PC-3 (cell line): ENCODE measurements at regions of chr10 and their contacts with region 1.

Region 1: GRCh38 chr10:125629763-125630376 is 53.1 kb downstream of the TEX36 start:
- DNase-seq: peak; percentile 68
- ATAC-seq: peak; percentile 74
- H3K4me3 ChIP-seq: no peak overlapping the region
- H3K27ac ChIP-seq: no peak overlapping the region
- H3K4me1 ChIP-seq: peaks cover 14% of the 10 kb centered on the region
- H3K27me3 ChIP-seq: peaks cover 23% of the 10 kb centered on the region
- CTCF ChIP-seq: peak; percentile 72

Region 2: GRCh38 chr10:125472032-125472607 is 157.8 kb before region 1 on chr10:
- CTCF ChIA-PET with region 1: no interaction called
- POLR2A ChIA-PET with region 1: no interaction called
- intact Hi-C with region 1: no loop called
- DNase-seq: no peak
- ATAC-seq: no peak
- H3K4me3 ChIP-seq: no peak overlapping the region
- H3K27ac ChIP-seq: no peak overlapping the region
- H3K4me1 ChIP-seq: no peaks in the 10 kb centered on the region
- H3K27me3 ChIP-seq: peaks cover 96% of the 10 kb centered on the region
- CTCF ChIP-seq: no peak

Region 3: DNA sequence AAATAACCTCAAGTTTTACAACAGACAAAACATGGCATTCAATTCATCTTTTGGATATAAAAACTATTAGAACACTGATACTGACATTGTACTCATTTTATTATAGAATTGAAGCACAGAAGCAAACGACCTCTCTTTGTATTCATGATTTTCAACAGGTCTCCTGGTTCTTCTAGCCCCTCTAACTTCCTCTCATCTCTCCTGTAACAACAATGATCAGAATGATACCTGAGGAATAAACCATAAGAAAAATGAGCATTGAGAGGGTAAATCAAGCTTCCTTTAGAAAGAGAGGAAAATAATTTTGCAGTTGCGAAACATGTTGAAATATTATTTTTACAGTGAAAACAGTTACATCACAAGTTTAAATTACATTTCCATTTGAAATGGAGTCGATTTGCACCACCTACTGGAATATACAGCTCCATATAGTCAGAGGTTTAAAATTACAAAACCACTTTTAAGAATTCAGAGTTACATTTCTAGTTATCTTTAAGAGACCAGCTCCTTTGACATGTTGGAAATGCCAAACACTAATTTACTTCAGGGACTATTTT is 70.6 kb after region 1 on chr10:
- CTCF ChIA-PET with region 1: no interaction called
- POLR2A ChIA-PET with region 1: no interaction called
- intact Hi-C with region 1: loop called (anchors 2 kb)
- DNase-seq: peak; percentile 37
- ATAC-seq: no peak
- H3K4me3 ChIP-seq: no peak overlapping the region
- H3K27ac ChIP-seq: no peak overlapping the region
- H3K4me1 ChIP-seq: peaks cover 5% of the 10 kb centered on the region
- H3K27me3 ChIP-seq: no peaks in the 10 kb centered on the region
- CTCF ChIP-seq: peak; percentile 54

Region 4: DNA sequence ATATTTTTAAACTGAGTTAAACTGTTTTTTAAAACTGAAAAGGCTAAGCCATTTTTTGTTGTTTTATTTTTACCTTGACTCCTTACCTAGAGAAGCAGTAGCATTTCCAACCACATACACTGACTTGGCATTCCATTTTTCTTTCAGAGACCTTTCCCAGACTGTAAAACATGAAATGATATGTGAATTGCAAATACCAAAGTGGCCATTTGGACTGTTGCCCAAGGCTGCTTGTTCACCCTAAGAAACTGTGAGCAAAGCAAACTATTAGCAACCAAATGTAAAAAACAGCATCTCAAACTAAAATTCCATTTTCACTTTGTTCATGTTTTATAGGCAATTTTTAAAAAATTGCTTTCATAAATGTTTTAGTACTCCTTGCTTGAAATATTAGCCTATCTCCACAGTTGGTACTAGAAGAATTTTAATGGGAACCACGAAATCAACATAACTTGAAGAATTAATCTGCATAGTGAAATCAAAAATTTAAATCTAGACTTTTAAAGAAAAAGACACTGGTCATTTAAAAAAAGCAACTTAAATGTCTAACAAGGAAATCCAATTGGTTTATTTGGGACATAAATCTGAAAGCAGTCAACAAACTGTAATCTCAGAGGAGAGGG is 182.4 kb after region 1 on chr10:
- CTCF ChIA-PET with region 1: no interaction called
- POLR2A ChIA-PET with region 1: no interaction called
- intact Hi-C with region 1: no loop called
- DNase-seq: peak; percentile 21
- ATAC-seq: peak; percentile 42
- H3K4me3 ChIP-seq: no peak overlapping the region
- H3K27ac ChIP-seq: peak overlapping the region; percentile 57
- H3K4me1 ChIP-seq: no peaks in the 10 kb centered on the region
- H3K27me3 ChIP-seq: no peaks in the 10 kb centered on the region
- CTCF ChIP-seq: no peak

Region 5: GRCh38 chr10:126634915-126635314 is 1005.0 kb after region 1 on chr10:
- CTCF ChIA-PET with region 1: no interaction called
- POLR2A ChIA-PET with region 1: no interaction called
- intact Hi-C with region 1: no loop called
- DNase-seq: peak; percentile 94
- ATAC-seq: peak; percentile 89
- H3K4me3 ChIP-seq: peak overlapping the region; percentile 33; the same call in 1 of the 2 replicates
- H3K27ac ChIP-seq: peak overlapping the region; percentile 99
- H3K4me1 ChIP-seq: peaks cover 23% of the 10 kb centered on the region
- H3K27me3 ChIP-seq: no peaks in the 10 kb centered on the region
- CTCF ChIP-seq: no peak